Head of caudate nucleus (tissue), 42 donors: ENCODE measurements at regions of chr13 and their contacts with region 1.

Region 1: GRCh38 chr13:79936368-79937136 is 404.4 kb downstream of the SPRY2 start:
- DNase-seq: peak in 41 of 42 donors; percentile 28 to 92 (median 76)

Region 2: DNA sequence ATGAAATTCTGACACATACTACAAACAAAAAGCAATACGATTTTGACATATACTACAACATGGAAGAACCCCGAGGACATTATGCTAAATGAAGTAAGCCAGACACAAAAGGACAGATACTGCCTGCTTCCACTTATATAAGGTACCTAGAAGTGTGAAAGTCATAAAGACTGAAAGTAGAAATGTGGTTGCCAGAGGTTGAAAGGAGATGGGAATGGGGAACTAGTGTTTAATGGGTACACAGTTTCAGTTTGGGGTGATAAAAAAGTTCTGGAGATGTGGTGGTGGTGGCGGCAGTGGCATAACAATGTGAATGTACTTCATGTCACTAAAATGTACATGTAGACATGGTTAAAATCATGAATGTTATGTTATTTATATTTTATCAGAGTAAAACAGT is 467.7 kb before region 1 on chr13:
- intact Hi-C with region 1: no loop called
- DNase-seq: no peak

Region 3: DNA sequence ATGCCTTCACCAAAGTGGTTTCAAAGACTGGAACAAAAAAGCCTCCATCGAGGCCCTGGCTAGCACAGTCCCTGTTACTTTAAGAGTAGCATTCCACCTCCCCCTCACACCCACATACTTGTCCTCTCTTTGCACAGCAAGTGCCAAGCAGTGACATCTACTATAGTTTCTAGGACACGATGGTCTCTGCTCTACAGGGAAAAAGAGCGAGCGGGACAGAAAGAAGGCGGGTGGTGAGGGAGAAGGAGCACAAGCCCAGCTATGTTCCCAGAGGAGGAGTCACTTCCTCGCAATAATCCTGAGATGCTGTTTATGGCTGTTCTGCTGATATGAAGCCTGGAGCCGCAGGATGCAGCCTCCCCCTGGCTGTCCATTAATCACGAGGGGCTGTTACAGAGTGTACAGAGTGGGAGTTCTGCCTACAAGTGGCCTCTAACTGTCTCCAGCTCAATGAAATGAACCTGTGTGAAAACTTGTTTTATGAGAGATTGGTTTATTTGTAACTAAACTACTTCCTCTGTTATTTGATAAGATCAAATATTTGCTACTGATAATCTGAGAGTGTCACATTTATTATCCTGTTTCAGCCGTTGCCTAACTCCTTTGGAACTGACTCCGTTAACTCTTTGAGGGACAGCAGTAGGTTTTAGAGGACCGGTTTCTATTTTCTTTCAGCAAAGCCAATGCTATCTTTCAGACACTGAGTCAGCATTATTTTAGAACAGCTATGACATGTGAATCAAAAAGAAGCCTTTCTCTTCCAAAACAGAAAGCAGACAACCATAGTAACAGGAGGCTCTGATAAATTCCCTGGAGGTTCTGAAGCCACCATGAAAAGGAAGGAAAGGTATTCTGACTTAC is 196.4 kb after region 1 on chr13:
- intact Hi-C with region 1: loop called (anchors 10 kb)
- DNase-seq: peak; percentile 24 to 85 (median 61)